HepG2 (cell line): ENCODE measurements at regions of chr5 and their contacts with region 1.

Region 1: DNA sequence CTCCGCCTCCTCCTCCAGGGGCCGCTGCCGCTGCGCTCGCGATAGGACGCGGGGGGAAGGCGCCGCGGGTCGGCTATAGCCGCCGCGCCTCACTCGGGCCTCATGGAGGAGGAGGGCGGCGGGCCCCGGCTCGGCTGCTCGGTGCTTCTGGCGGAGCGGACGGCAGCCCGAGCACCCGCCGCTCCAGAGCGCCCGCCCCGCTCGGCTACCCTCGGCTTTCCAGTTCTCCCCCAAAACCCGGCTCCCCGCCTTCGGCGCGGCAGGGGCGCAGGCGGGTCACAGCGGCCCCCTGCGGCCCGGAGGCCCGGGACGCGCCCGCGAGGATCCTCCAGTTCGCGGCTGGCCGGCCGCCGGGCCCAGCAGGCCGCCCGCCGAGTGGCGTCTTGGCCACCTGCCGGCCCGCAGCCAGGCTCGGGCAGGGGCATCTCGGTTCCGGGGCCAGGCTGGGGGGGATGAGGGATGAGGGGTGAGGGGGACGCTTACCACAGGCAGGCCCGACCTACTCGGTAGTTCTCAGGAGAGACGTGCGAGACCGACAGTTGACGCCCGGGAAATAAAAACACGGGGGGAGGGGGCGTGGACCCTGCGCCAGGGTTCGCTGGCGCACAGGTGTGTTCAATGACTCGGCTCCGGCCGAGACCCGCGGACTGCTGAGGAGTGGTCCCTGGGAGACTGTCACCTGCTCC is at the start of gene PAIP1:
- DNase-seq: peak; percentile 66
- ATAC-seq: peak; percentile 89
- H3K4me3 ChIP-seq: peak within 1 kb of the TSS; percentile 77 to 90 (median 84)
- H3K27ac ChIP-seq: peak within 1 kb of the TSS; percentile 95
- H3K4me1 ChIP-seq: peaks cover 48% of the 10 kb centered on the region
- H3K27me3 ChIP-seq: no peaks in the 10 kb centered on the region; a peak in 2 of 5 replicates
- CTCF ChIP-seq: peak; percentile 51; the same call in 1 of the 2 replicates
- EP300 ChIP-seq: no peak
- POLR2A ChIP-seq: peak; percentile 54 to 72
- RAD21 ChIP-seq: peak; percentile 48
- total RNA-seq, gene PAIP1: 116 and 141 TPM in 2 replicates

Region 2: GRCh38 chr5:43367909-43368648 is 188.9 kb before region 1 on chr5:
- CTCF ChIA-PET with region 1: no interaction called
- POLR2A ChIA-PET with region 1: no interaction called
- in situ Hi-C with region 1: no loop called
- intact Hi-C with region 1: no loop called
- DNase-seq: no peak
- ATAC-seq: peak; percentile 43; the same call in 1 of the 3 replicates
- H3K4me3 ChIP-seq: no peak overlapping the region
- H3K27ac ChIP-seq: no peak overlapping the region
- H3K4me1 ChIP-seq: peaks cover 19% of the 10 kb centered on the region
- H3K27me3 ChIP-seq: no peaks in the 10 kb centered on the region
- CTCF ChIP-seq: no peak
- EP300 ChIP-seq: no peak
- POLR2A ChIP-seq: no peak
- RAD21 ChIP-seq: no peak

Region 3: GRCh38 chr5:43602461-43603343 is 45.7 kb after region 1 on chr5 and contains the start of gene NNT:
- CTCF ChIA-PET with region 1: no interaction called
- POLR2A ChIA-PET with region 1: interaction called, 3 read pairs
- in situ Hi-C with region 1: no loop called
- intact Hi-C with region 1: loop called (anchors 1 kb)
- DNase-seq: peak; percentile 61
- ATAC-seq: peak; percentile 95
- H3K4me3 ChIP-seq: peak within 1 kb of the TSS; percentile 61 to 89 (median 80)
- H3K27ac ChIP-seq: peak within 1 kb of the TSS; percentile 84
- H3K4me1 ChIP-seq: peaks cover 47% of the 10 kb centered on the region
- H3K27me3 ChIP-seq: no peaks in the 10 kb centered on the region; a peak in 1 of 5 replicates
- CTCF ChIP-seq: no peak; the same call in 1 of the 2 replicates
- EP300 ChIP-seq: no peak
- POLR2A ChIP-seq: peak; percentile 33 to 61; a peak in 3 of 4 replicates
- RAD21 ChIP-seq: peak; percentile 45; the same call in 1 of the 2 replicates
- total RNA-seq, gene NNT: 58.0 and 73.3 TPM in 2 replicates